ENCODE measurements at regions of chr14 and their contacts with region 1.

Region 1: GRCh38 chr14:95515596-95516552 is 576 bp downstream of the SYNE3 start:
- DNase-seq: peak; percentile 74 to 88
- H3K4me3 ChIP-seq: peak overlapping the region; percentile 76 to 86
- H3K27ac ChIP-seq: peak overlapping the region; percentile 85 to 86
- H3K4me1 ChIP-seq: peaks cover 0 to 62% (median 55%) of the 10 kb centered on the region in 4 donors
- H3K27me3 ChIP-seq: no peaks in the 10 kb centered on the region
- CTCF ChIP-seq: peak; percentile 33 to 48

Region 2: GRCh38 chr14:95098984-95099599 is 416.8 kb before region 1 on chr14:
- intact Hi-C with region 1: no loop called
- DNase-seq: peak; percentile 65 to 75
- H3K4me3 ChIP-seq: no peak overlapping the region
- H3K27ac ChIP-seq: no peak overlapping the region
- H3K4me1 ChIP-seq: peaks cover 0 to 44% (median 13%) of the 10 kb centered on the region in 4 donors
- H3K27me3 ChIP-seq: no peaks in the 10 kb centered on the region
- CTCF ChIP-seq: peak; percentile 64 to 70

Region 3: DNA sequence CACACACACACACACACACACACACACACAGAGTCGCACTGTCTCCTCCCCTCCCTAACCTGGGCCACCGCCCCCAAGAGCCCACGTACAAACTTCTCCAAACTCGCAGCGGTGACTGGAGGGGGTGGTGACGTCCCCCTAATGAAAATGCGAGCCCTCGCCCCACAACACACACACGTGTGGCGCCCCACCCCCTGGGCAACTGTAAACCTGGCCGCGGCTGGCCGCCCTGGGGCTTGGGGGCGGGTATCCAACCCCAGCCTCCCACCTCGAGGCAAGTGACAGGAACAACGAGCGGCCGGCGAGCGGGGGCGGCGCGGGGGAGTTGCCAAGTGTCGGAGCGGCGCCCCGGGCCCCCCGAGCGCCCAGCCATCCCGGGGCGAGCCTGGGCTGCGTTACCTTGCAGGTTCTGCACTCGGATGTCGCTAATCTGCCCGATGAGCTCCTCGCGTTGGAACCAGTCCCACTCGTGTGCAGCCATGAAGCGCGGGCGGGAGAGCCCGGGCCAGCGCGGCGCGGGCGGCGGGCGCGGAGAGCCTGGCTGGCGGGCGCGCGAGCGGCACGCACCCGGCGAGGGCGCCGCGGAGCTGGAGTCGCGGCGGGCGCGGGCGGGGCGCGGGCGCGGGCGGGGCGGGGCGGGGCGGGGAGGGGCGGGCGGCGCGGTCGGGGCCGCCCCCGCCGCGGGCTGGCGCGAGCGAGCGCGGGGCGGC is 196.4 kb before region 1 on chr14 and contains the start of gene CLMN:
- intact Hi-C with region 1: loop called (anchors 10 kb)
- DNase-seq: no peak
- H3K4me3 ChIP-seq: peak within 1 kb of the TSS; percentile 83 to 94
- H3K27ac ChIP-seq: peak within 1 kb of the TSS; percentile 74 to 81
- H3K4me1 ChIP-seq: peaks cover 0 to 42% (median 27%) of the 10 kb centered on the region in 4 donors
- H3K27me3 ChIP-seq: no peaks in the 10 kb centered on the region
- CTCF ChIP-seq: no peak

Region 4: GRCh38 chr14:95483309-95484165 is 32.3 kb before region 1 on chr14:
- intact Hi-C with region 1: loop called (anchors 5 kb)
- DNase-seq: peak; percentile 87 to 93
- H3K4me3 ChIP-seq: no peak overlapping the region
- H3K27ac ChIP-seq: peak overlapping the region; percentile 79 to 87
- H3K4me1 ChIP-seq: peaks cover 0 to 82% (median 41%) of the 10 kb centered on the region in 4 donors
- H3K27me3 ChIP-seq: no peaks in the 10 kb centered on the region
- CTCF ChIP-seq: no peak

Region 5: GRCh38 chr14:95695913-95696312 is 180.0 kb after region 1 on chr14:
- intact Hi-C with region 1: no loop called
- DNase-seq: no peak
- H3K4me3 ChIP-seq: no peak overlapping the region
- H3K27ac ChIP-seq: no peak overlapping the region
- H3K4me1 ChIP-seq: peaks cover 0 to 15% (median 0%) of the 10 kb centered on the region in 4 donors
- H3K27me3 ChIP-seq: peaks cover 0 to 18% of the 10 kb centered on the region in 2 donors
- CTCF ChIP-seq: no peak

Measured in tibial artery (tissue), 4 donors.